ENCODE measurements at regions of chr7 and their contacts with region 1.

Region 1: GRCh38 chr7:25851332-25852210 is 300.4 kb upstream of the NFE2L3 start:
- DNase-seq: no peak
- H3K4me3 ChIP-seq: peak overlapping the region; percentile 4; the same call in 1 of the 2 replicates
- CTCF ChIP-seq: peak; percentile 88

Region 2: GRCh38 chr7:25259587-25260243 is 591.9 kb before region 1 on chr7:
- CTCF ChIA-PET with region 1: interaction called, 157 read pairs
- POLR2A ChIA-PET with region 1: no interaction called
- DNase-seq: peak; percentile 36
- H3K4me3 ChIP-seq: no peak overlapping the region
- CTCF ChIP-seq: peak; percentile 83

Region 3: GRCh38 chr7:25389489-25390106 is 462.0 kb before region 1 on chr7:
- CTCF ChIA-PET with region 1: interaction called, 199 read pairs
- POLR2A ChIA-PET with region 1: no interaction called
- DNase-seq: no peak
- H3K4me3 ChIP-seq: no peak overlapping the region
- CTCF ChIP-seq: peak; percentile 30

Region 4: DNA sequence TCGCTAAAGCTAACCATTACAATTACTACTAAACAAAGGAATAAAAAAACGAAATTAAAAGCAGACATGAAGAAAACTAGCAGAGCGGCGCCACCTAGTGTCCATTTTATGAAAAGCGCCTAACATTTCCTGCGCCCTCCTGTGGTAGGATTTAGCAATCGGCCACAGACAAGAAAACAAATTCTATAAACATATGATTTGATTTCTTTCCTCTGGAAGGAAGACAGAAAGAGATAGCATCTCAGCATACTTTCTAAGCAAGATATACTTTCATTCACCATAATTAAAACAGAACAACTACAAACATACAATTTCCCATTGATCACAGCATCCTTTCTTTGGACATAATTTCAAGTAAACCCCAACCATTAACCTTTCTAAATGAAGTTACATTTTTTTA is 285.6 kb before region 1 on chr7:
- CTCF ChIA-PET with region 1: interaction called, 192 read pairs
- POLR2A ChIA-PET with region 1: interaction called, 3 read pairs
- DNase-seq: peak; percentile 17
- H3K4me3 ChIP-seq: no peak overlapping the region
- CTCF ChIP-seq: peak; percentile 94

Region 5: DNA sequence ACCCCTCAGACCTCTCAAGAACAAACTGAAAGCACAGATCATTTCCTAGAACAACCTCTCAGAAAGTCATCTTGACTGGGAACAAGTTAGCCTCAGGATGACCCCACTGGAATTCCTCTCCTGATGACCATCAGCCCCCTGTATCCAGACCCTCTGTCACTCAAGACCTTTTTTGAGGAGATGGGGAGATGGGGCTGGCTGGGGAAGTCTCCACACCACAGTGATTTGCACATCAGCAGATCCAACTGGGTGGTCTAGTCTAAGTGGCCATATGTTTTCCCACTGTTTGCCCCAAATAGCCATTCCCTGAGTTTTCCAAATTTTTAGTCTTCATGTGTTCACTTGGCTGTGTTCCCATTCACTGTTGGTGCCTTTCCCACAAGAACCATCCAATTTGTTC is 170.9 kb before region 1 on chr7:
- CTCF ChIA-PET with region 1: no interaction called
- POLR2A ChIA-PET with region 1: no interaction called
- DNase-seq: no peak
- H3K4me3 ChIP-seq: no peak overlapping the region
- CTCF ChIP-seq: no peak

Region 6: DNA sequence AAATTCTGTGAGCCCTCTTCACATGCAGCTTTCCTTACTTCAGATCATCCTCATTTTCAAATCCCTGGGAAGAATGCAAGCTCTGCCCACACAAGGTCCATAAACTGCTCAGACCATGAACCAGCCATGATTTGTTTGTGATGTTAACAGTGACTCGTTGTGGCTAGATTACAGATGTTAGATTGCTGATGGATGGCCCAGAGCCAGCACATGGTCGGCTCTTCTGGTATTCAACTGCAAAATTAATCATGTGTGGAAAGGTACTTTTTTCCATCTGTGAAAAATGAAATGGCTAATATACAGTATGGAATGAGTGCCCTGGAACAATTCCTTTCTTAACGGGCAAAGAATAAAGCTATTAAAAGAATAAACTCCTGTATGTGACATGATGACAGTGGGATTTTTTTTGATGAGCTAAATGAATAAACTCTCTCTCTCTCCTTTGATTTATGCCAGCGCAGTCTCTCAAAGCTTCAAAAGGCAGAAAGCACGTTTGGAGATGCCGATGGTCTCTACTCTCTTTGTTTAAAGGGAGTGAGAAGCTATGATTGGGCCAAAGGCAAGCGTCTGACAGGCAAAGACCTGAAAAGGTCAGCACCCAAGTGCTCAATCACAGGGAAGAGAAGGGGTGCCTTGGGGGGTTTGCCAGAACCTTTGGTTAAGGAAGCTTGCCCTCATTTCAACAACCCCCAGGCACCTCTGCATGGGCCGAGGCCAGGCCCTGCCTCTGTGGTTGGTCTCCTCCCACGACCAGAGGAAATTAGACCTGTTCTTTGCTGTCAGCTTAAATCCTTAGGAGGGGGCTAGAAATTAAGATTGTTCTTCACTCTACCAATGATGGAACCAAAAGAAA is 143.6 kb before region 1 on chr7:
- CTCF ChIA-PET with region 1: interaction called, 10 read pairs
- POLR2A ChIA-PET with region 1: no interaction called
- DNase-seq: no peak
- H3K4me3 ChIP-seq: no peak overlapping the region
- CTCF ChIP-seq: no peak

Region 7: DNA sequence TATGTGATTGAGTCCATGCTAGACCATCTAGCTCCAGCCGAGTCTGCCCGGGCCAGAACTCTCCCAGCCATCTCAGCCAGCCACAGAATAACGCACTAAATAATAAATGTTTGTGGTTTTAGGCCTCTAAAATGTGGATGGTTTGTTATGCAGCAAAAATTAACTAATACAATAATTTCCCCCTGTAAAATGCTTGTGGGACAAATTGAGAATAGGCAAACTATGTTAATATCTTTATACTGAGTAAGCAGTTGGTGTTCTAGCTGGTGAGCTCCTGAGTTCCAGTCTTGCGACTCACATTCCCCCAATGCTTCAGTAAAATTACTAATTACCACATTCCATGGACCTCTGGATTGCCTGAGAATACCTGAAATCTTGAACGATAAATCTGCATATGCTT is 16.4 kb before region 1 on chr7:
- CTCF ChIA-PET with region 1: interaction called, 28 read pairs
- POLR2A ChIA-PET with region 1: interaction called, 8 read pairs
- DNase-seq: peak; percentile 70
- H3K4me3 ChIP-seq: no peak overlapping the region
- CTCF ChIP-seq: no peak

Region 8: GRCh38 chr7:25862260-25863037 is 10.9 kb after region 1 on chr7:
- CTCF ChIA-PET with region 1: interaction called, 12 read pairs
- POLR2A ChIA-PET with region 1: no interaction called
- DNase-seq: peak; percentile 100
- H3K4me3 ChIP-seq: peak overlapping the region; percentile 53; the same call in 1 of the 2 replicates
- CTCF ChIP-seq: no peak

Region 9: GRCh38 chr7:26117142-26117807 is 265.7 kb after region 1 on chr7:
- CTCF ChIA-PET with region 1: no interaction called
- POLR2A ChIA-PET with region 1: no interaction called
- DNase-seq: no peak
- H3K4me3 ChIP-seq: no peak overlapping the region
- CTCF ChIP-seq: no peak